ENCODE measurements at regions of chr9 and their contacts with region 1.

Region 1: DNA sequence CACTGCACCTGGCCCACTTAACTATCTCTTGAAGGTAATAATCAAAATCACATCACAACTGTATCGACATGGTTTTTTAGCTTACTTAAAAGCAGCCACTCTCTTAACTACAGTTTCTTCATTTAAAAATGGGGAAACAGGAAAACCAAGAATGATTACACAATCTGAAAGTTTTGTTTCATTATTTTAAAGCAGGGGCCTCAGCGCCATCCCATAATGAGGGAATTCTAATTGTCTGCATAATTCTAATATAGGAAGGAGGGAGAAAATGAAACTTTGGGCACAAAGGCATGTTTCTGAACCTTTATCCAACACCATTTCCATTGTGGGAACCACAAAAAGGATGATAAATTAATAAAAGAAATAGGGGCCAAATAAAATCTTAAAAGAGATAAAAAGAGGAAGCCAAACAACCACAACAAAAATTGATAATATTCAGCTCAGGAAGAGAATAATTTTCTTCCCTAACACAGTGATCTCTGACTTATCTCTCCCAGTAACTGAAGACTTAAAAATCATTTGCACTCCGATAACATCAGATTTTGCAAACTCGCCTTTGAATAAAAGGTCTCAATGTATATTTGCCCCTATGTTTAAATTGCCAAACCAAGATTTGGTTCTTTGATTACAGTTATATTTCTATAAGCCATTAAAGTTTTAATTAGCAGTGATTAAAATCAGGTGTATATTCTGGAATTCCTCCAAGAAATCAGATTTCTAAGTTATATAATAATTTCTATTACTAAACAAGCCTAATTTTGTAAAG is 7.4 kb downstream of the HACD4 start:
- DNase-seq: no peak
- ATAC-seq: no peak
- H3K4me3 ChIP-seq: no peak overlapping the region
- H3K4me3 Mint-ChIP-seq: no peak overlapping the region
- H3K27ac ChIP-seq: no peak overlapping the region
- H3K27ac Mint-ChIP-seq: no peak overlapping the region
- H3K4me1 ChIP-seq: no peaks in the 10 kb centered on the region
- H3K4me1 Mint-ChIP-seq: peaks cover 52% of the 10 kb centered on the region
- H3K27me3 ChIP-seq: no peaks in the 10 kb centered on the region
- H3K27me3 Mint-ChIP-seq: no peaks in the 10 kb centered on the region
- CTCF ChIP-seq: no peak

Region 2: GRCh38 chr9:19471737-19472648 is 1552.1 kb before region 1 on chr9:
- CTCF ChIA-PET with region 1: no interaction called
- POLR2A ChIA-PET with region 1: no interaction called
- intact Hi-C with region 1: loop called in 1 of 2 experiments (anchors 5 kb)
- DNase-seq: peak in 11 of 14 experiments; percentile 7 to 59 (median 24)
- ATAC-seq: peak; percentile 71
- H3K4me3 ChIP-seq: peak overlapping the region; percentile 40
- H3K4me3 Mint-ChIP-seq: peak overlapping the region; percentile 71
- H3K27ac ChIP-seq: no peak overlapping the region
- H3K27ac Mint-ChIP-seq: no peak overlapping the region
- H3K4me1 ChIP-seq: peaks cover 10% of the 10 kb centered on the region
- H3K4me1 Mint-ChIP-seq: peaks cover 12% of the 10 kb centered on the region
- H3K27me3 ChIP-seq: no peaks in the 10 kb centered on the region
- H3K27me3 Mint-ChIP-seq: peaks cover 15% of the 10 kb centered on the region
- CTCF ChIP-seq: peak; percentile 68

Region 3: GRCh38 chr9:20771729-20772128 is 252.3 kb before region 1 on chr9:
- CTCF ChIA-PET with region 1: no interaction called
- POLR2A ChIA-PET with region 1: no interaction called
- intact Hi-C with region 1: no loop called
- DNase-seq: no peak
- ATAC-seq: no peak
- H3K4me3 ChIP-seq: no peak overlapping the region
- H3K4me3 Mint-ChIP-seq: no peak overlapping the region
- H3K27ac ChIP-seq: no peak overlapping the region
- H3K27ac Mint-ChIP-seq: no peak overlapping the region
- H3K4me1 ChIP-seq: no peaks in the 10 kb centered on the region
- H3K4me1 Mint-ChIP-seq: no peaks in the 10 kb centered on the region
- H3K27me3 ChIP-seq: no peaks in the 10 kb centered on the region
- H3K27me3 Mint-ChIP-seq: no peaks in the 10 kb centered on the region
- CTCF ChIP-seq: no peak

Region 4: DNA sequence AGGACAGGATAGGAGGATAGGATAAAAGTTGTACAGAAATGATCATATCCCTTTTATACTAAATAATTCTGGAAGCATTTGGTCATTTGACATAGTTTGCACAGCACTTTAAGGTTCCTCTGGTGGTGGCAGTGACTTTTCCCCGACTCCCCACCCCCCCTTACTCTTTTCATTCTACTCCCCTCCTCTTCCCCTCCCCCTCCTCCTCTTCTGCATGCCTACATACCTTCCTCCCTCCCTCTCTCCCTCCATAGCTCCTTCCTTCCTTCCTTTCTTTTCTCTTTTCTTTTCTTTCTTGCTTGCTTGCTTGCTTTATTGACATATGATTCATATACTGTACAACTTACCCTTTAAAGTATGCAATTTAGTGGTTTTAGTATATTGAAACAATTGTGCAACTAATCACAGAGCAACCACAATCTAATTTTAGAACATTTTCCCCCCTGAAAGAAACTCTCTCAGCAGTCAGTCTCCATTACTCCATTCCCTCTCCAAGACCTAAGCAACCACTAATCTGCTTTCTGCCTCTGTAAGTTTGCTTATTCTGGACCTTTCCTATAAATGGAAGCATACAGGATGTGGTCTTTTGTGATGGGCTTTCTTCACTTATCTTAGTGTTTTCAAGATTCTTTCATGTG is 151.6 kb before region 1 on chr9:
- CTCF ChIA-PET with region 1: no interaction called
- POLR2A ChIA-PET with region 1: no interaction called
- intact Hi-C with region 1: no loop called
- DNase-seq: no peak
- ATAC-seq: no peak
- H3K4me3 ChIP-seq: no peak overlapping the region
- H3K4me3 Mint-ChIP-seq: no peak overlapping the region
- H3K27ac ChIP-seq: no peak overlapping the region
- H3K27ac Mint-ChIP-seq: no peak overlapping the region
- H3K4me1 ChIP-seq: no peaks in the 10 kb centered on the region
- H3K4me1 Mint-ChIP-seq: peaks cover 7% of the 10 kb centered on the region
- H3K27me3 ChIP-seq: no peaks in the 10 kb centered on the region
- H3K27me3 Mint-ChIP-seq: no peaks in the 10 kb centered on the region
- CTCF ChIP-seq: no peak

Region 5: GRCh38 chr9:21668516-21668915 is 644.5 kb after region 1 on chr9:
- CTCF ChIA-PET with region 1: no interaction called
- POLR2A ChIA-PET with region 1: no interaction called
- intact Hi-C with region 1: no loop called
- DNase-seq: no peak
- ATAC-seq: no peak
- H3K4me3 ChIP-seq: no peak overlapping the region
- H3K4me3 Mint-ChIP-seq: no peak overlapping the region
- H3K27ac ChIP-seq: no peak overlapping the region
- H3K27ac Mint-ChIP-seq: no peak overlapping the region
- H3K4me1 ChIP-seq: peaks cover 6% of the 10 kb centered on the region
- H3K4me1 Mint-ChIP-seq: peaks cover 6% of the 10 kb centered on the region
- H3K27me3 ChIP-seq: no peaks in the 10 kb centered on the region
- H3K27me3 Mint-ChIP-seq: no peaks in the 10 kb centered on the region
- CTCF ChIP-seq: no peak

Measured in CD4-positive, alpha-beta T cell (primary cell).